ENCODE measurements at regions of chr1 and their contacts with region 1.

Region 1: GRCh38 chr1:8817406-8818324 is at the start of gene RERE:
- DNase-seq: peak; percentile 84
- ATAC-seq: peak; percentile 96
- H3K4me3 ChIP-seq: peak within 1 kb of the TSS; percentile 89 to 95 (median 91)
- H3K27ac ChIP-seq: peak within 1 kb of the TSS; percentile 88
- H3K4me1 ChIP-seq: peaks cover 52% of the 10 kb centered on the region
- H3K27me3 ChIP-seq: no peaks in the 10 kb centered on the region; a peak in 1 of 5 replicates
- CTCF ChIP-seq: peak; percentile 22; the same call in 1 of the 2 replicates
- EP300 ChIP-seq: no peak
- POLR2A ChIP-seq: peak; percentile 80 to 94
- RAD21 ChIP-seq: no peak
- total RNA-seq, gene RERE: 18.6 and 21.9 TPM in 2 replicates

Region 2: GRCh38 chr1:8848663-8849386 is 31.2 kb after region 1 on chr1:
- CTCF ChIA-PET with region 1: interaction called, 4 read pairs
- POLR2A ChIA-PET with region 1: interaction called, 19 read pairs
- in situ Hi-C with region 1: no loop called
- intact Hi-C with region 1: no loop called
- DNase-seq: peak; percentile 88
- ATAC-seq: peak; percentile 91
- H3K4me3 ChIP-seq: peak overlapping the region; percentile 6 to 58 (median 31); a peak in 5 of 6 replicates
- H3K27ac ChIP-seq: peak overlapping the region; percentile 39
- H3K4me1 ChIP-seq: peaks cover 67% of the 10 kb centered on the region
- H3K27me3 ChIP-seq: no peaks in the 10 kb centered on the region
- CTCF ChIP-seq: peak; percentile 94
- EP300 ChIP-seq: 0 out of 4 replicates have a peak, but pooled peaks of 1 of the 2 experiments have one; percentile 6
- POLR2A ChIP-seq: 0 out of 4 replicates have a peak, but pooled peaks of 1 of the 2 experiments have one; percentile 16
- RAD21 ChIP-seq: peak; percentile 98

Region 3: GRCh38 chr1:8910914-8911313 is 93.2 kb after region 1 on chr1:
- CTCF ChIA-PET with region 1: no interaction called
- POLR2A ChIA-PET with region 1: no interaction called
- in situ Hi-C with region 1: no loop called
- intact Hi-C with region 1: no loop called
- DNase-seq: peak; percentile 45
- ATAC-seq: peak; percentile 66
- H3K4me3 ChIP-seq: no peak overlapping the region
- H3K27ac ChIP-seq: no peak overlapping the region
- H3K4me1 ChIP-seq: peaks cover 60% of the 10 kb centered on the region
- H3K27me3 ChIP-seq: no peaks in the 10 kb centered on the region
- CTCF ChIP-seq: peak; percentile 29; the same call in 1 of the 2 replicates
- EP300 ChIP-seq: no peak
- POLR2A ChIP-seq: no peak
- RAD21 ChIP-seq: no peak

Measured in HepG2 (cell line).